ENCODE measurements at regions of chr5 and their contacts with region 1.

Region 1: DNA sequence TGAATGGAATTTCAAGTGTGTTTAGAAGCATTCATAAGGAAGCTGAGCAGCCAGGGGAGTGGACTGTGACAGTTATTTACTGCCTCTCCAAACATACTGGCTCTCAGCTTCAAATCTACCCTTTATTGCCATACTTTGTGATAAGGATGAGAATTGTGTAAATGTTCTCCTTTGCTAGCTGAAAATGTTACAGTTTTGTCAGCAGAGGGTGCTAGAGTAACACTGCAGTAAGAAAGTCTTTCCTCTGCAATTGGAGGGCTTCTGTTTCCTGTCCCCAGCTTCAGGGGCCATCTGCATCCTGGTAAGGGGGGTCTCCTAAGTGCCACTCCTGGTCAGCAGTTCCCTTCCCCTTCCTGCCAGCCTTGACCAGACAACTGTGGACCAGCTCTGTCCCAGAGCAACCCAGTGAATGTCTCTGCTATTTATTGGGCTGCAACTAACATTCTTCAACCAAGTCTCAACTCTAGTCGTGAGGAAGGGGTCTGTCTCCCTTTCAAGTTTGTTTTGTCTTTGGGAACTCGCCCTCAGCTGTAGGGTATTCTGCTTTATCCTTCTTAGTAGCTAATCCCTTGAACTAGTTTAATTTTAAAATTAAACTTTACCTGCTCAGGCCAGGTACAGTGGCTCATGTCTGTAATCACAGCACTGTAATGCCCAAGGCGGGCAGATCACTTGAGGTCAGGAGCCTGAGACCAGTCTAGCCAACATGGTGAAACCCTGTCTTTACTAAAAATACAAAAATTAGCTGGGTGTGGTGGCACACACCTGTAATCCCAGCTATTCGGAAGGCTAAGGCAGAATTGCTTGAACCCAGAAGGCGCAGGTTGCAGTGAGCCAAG is 45.3 kb downstream of the RAPGEF6 start:
- DNase-seq: no peak
- ATAC-seq: peak; percentile 77 to 78
- H3K4me3 ChIP-seq: no peak overlapping the region
- H3K27ac ChIP-seq: no peak overlapping the region
- H3K4me1 ChIP-seq: peaks cover 18% of the 10 kb centered on the region
- H3K27me3 ChIP-seq: no peaks in the 10 kb centered on the region
- CTCF ChIP-seq: peak; percentile 80

Region 2: DNA sequence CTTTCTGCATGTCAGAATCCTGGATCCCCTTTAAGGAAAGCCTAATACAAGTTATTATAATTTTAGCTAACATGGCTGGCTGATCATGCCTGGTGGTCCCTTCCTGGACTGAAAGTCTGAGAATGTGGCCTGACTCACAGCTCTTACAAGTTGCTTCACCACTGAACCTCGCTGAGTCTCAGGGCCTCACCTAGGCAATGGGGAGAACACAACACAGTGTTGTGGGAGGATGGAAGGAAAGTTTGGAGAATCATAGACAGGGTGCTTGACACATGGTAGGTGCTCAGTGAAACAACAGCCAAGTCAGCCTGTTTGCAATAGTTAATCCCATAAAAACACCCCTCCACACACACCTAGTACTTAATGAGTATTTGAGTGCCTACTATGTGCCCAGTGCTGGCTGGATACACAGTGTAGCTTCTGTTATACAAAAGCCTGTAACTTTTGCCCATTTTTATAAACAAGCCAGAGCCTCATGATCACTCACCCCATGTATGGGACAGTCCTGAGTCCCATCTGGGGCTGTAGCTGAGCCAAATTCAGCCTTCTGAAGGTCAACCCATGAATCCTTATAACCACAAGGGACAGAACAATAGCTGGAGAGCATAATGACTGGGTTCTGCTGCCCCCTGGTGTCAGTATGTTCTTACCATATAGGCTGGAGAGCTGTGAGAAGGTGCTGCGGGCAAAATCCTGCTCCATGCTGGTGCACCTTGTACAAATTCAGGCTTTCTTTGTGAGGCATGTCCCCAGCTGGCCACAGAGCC is 417.9 kb after region 1 on chr5:
- intact Hi-C with region 1: loop called (anchors 5 kb)
- DNase-seq: peak; percentile 66
- ATAC-seq: peak; percentile 73 to 81
- H3K4me3 ChIP-seq: no peak overlapping the region
- H3K27ac ChIP-seq: no peak overlapping the region
- H3K4me1 ChIP-seq: peaks cover 10% of the 10 kb centered on the region
- H3K27me3 ChIP-seq: peaks cover 22% of the 10 kb centered on the region
- CTCF ChIP-seq: peak; percentile 82